ENCODE measurements at regions of chr11 and their contacts with region 1.

Region 1: GRCh38 chr11:121591405-121592033 is 138.8 kb upstream of the SORL1-AS1 start:
- DNase-seq: peak; percentile 50 to 63
- ATAC-seq: peak; percentile 85 to 89
- H3K4me3 ChIP-seq: no peak overlapping the region
- H3K27ac ChIP-seq: no peak overlapping the region
- H3K4me1 ChIP-seq: peaks cover 7% of the 10 kb centered on the region
- CTCF ChIP-seq: peak; percentile 68
- EP300 ChIP-seq: no peak
- POLR2A ChIP-seq: no peak
- RAD21 ChIP-seq: peak; percentile 86 to 89

Region 2: GRCh38 chr11:121249039-121249663 is 342.4 kb before region 1 on chr11:
- CTCF ChIA-PET with region 1: interaction called, 11 read pairs
- POLR2A ChIA-PET with region 1: no interaction called
- DNase-seq: peak; percentile 9 to 31
- ATAC-seq: peak in 1 of 2 experiments; percentile 60; a peak in 2 of 6 replicates
- H3K4me3 ChIP-seq: no peak overlapping the region
- H3K27ac ChIP-seq: no peak overlapping the region
- H3K4me1 ChIP-seq: no peaks in the 10 kb centered on the region
- CTCF ChIP-seq: peak; percentile 56
- EP300 ChIP-seq: no peak
- POLR2A ChIP-seq: no peak
- RAD21 ChIP-seq: peak; percentile 36 to 39; a peak in 4 of 5 replicates

Region 3: GRCh38 chr11:121446752-121447156 is 144.8 kb before region 1 on chr11:
- CTCF ChIA-PET with region 1: interaction called, 29 read pairs
- POLR2A ChIA-PET with region 1: no interaction called
- DNase-seq: no peak
- ATAC-seq: no peak
- H3K4me3 ChIP-seq: no peak overlapping the region
- H3K27ac ChIP-seq: no peak overlapping the region
- H3K4me1 ChIP-seq: no peaks in the 10 kb centered on the region
- CTCF ChIP-seq: peak; percentile 21; the same call in 1 of the 3 replicates
- EP300 ChIP-seq: no peak
- POLR2A ChIP-seq: no peak
- RAD21 ChIP-seq: peak; percentile 28 to 37; a peak in 3 of 5 replicates